ENCODE measurements at regions of chr1 and their contacts with region 1.

Region 1: GRCh38 chr1:67814121-67814772 is 19.0 kb downstream of the GNG12 start:
- DNase-seq: no peak
- ATAC-seq: no peak
- H3K4me3 ChIP-seq: no peak overlapping the region
- H3K27ac ChIP-seq: no peak overlapping the region
- H3K4me1 ChIP-seq: no peaks in the 10 kb centered on the region
- H3K27me3 ChIP-seq: no peaks in the 10 kb centered on the region
- CTCF ChIP-seq: no peak
- EP300 ChIP-seq: no peak
- POLR2A ChIP-seq: no peak
- RAD21 ChIP-seq: no peak

Region 2: DNA sequence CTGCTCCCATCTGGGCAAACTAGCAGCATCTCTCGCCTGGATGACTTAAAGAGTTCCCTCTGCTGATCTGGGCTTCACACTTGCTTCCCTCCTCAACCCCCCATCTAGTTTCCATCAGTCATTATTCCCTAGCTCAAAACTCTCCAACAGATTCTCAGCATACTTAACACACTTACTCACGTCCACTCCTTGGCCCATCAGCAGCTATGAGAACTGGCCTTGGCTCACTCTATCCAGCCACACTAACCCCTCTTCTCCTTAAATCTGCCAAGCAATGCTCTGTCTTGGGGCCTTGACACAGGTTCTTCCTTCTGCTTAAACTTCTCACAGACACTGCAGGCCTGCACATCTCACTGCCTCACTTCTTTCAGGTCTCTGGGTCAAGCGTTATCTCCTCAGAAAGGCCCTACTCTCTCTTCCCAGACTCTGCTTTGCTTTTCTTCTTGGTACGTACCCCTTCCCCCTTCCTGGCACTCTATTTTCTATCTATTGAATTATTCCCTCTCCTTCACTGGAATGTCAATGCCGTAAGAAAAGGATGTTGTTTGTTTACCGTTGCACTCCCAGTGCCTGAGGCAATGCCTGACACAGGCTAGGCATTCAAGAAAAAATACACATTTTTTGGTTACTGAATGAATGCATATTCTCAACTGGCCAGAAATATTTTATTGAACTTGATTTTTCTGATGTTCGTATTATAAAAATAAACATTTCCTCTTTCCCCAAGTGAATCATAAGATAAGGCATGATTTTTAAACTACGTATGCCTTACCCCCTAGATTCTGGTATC is 22.4 kb before region 1 on chr1:
- CTCF ChIA-PET with region 1: interaction called, 14 read pairs
- POLR2A ChIA-PET with region 1: interaction called, 24 read pairs
- RAD21 ChIA-PET with region 1: interaction called, 87 read pairs
- SMC1A ChIA-PET with region 1: interaction called, 389 read pairs
- in situ Hi-C with region 1: no loop called
- intact Hi-C with region 1: no loop called
- DNase-seq: no peak
- ATAC-seq: no peak
- H3K4me3 ChIP-seq: no peak overlapping the region
- H3K27ac ChIP-seq: no peak overlapping the region
- H3K4me1 ChIP-seq: no peaks in the 10 kb centered on the region
- H3K27me3 ChIP-seq: no peaks in the 10 kb centered on the region; a peak in 2 of 4 replicates
- CTCF ChIP-seq: no peak
- EP300 ChIP-seq: no peak
- POLR2A ChIP-seq: no peak
- RAD21 ChIP-seq: no peak

Region 3: GRCh38 chr1:67824766-67825165 is 10.5 kb after region 1 on chr1:
- CTCF ChIA-PET with region 1: interaction called, 7 read pairs
- POLR2A ChIA-PET with region 1: interaction called, 155 read pairs
- RAD21 ChIA-PET with region 1: interaction called, 195 read pairs
- SMC1A ChIA-PET with region 1: interaction called, 241 read pairs
- in situ Hi-C with region 1: no loop called
- intact Hi-C with region 1: no loop called
- DNase-seq: no peak
- ATAC-seq: no peak
- H3K4me3 ChIP-seq: no peak overlapping the region
- H3K27ac ChIP-seq: no peak overlapping the region
- H3K4me1 ChIP-seq: no peaks in the 10 kb centered on the region
- H3K27me3 ChIP-seq: peaks cover 0 to 3% of the 10 kb centered on the region in 2 experiments; a peak in 1 of 4 replicates
- CTCF ChIP-seq: no peak
- EP300 ChIP-seq: no peak
- POLR2A ChIP-seq: no peak
- RAD21 ChIP-seq: no peak

Region 4: DNA sequence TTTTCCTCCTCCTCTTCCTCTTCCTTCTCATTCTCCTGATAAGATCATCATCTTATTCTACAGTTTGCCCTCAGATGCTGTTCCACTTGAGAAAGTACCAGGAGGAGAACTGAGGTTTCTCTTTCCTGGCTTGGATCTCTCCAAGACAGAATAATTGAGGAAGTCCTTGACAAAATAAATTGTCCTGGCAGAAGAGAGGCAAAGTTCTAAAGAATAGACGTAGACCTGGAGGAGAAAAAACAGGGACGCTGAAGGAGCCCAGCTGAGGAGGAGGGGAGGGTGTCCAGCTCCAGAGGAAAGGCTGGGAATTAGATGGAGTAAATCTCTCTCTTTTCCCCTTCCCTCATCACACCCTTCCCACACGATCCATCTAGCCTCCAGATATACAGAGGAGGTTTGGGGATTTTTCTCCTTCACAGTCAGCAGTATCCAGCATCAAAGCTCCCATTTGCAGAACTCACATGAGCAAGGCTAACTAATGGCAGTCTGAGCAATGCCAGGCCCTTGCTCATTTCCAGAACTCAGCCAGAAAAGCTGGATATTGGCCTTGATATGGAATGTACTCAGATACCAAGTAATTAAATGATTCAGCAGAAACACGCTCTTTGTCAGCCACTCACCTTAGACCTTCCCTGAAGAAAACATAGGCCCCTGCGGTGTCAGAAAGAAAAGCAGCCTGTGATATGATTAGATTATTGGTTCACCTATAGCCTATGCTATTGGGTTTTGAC is 24.1 kb after region 1 on chr1:
- CTCF ChIA-PET with region 1: interaction called, 17 read pairs
- POLR2A ChIA-PET with region 1: interaction called, 155 read pairs
- RAD21 ChIA-PET with region 1: interaction called, 195 read pairs
- SMC1A ChIA-PET with region 1: interaction called, 241 read pairs
- in situ Hi-C with region 1: no loop called
- intact Hi-C with region 1: no loop called
- DNase-seq: no peak
- ATAC-seq: peak; percentile 16; the same call in 1 of the 3 replicates
- H3K4me3 ChIP-seq: no peak overlapping the region
- H3K27ac ChIP-seq: no peak overlapping the region
- H3K4me1 ChIP-seq: no peaks in the 10 kb centered on the region
- H3K27me3 ChIP-seq: peaks cover 0 to 3% of the 10 kb centered on the region in 2 experiments; a peak in 2 of 4 replicates
- CTCF ChIP-seq: no peak
- EP300 ChIP-seq: no peak
- POLR2A ChIP-seq: no peak
- RAD21 ChIP-seq: no peak

Measured in GM12878 (cell line).